Activated B cell treated with CpG ODN at 0.5 μM for 24 hours (primary cell): ENCODE measurements at regions of chr17 and their contacts with region 1.

Region 1: GRCh38 chr17:27293898-27294688 is at the start of gene WSB1:
- DNase-seq: peak; percentile 94
- ATAC-seq: peak; percentile 83
- H3K4me3 Mint-ChIP-seq: peak within 1 kb of the TSS; percentile 100
- H3K27ac Mint-ChIP-seq: peak within 1 kb of the TSS; percentile 99
- H3K4me1 Mint-ChIP-seq: peaks cover 45% of the 10 kb centered on the region
- H3K27me3 Mint-ChIP-seq: no peaks in the 10 kb centered on the region
- CTCF ChIP-seq: no peak
- total RNA-seq, gene WSB1: 115 and 125 TPM in 2 replicates

Region 2: DNA sequence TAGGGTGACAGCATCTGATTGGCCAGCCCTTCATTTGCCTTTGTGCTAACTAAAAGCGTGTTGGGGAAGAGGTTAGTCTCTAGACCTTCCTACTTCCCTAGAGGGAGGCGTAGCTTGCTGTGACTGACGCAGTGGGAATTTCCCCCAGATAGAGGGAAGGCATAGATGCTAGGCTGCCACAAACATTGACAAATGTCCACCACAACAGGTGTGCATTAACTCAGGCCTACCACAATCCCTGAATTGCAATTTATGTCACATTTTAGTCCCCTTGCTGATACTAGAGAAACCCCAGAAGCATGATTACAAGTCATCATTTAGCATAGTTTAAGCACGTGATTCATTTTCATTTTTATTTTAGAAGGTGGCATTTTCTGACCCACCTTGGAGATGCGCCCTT is 76.5 kb before region 1 on chr17:
- CTCF ChIA-PET with region 1: no interaction called
- POLR2A ChIA-PET with region 1: interaction called, 61 read pairs
- intact Hi-C with region 1: loop called (anchors 1 kb)
- DNase-seq: no peak
- ATAC-seq: peak; percentile 88
- H3K4me3 Mint-ChIP-seq: peak overlapping the region; percentile 74
- H3K27ac Mint-ChIP-seq: peak overlapping the region; percentile 99
- H3K4me1 Mint-ChIP-seq: peaks cover 48% of the 10 kb centered on the region
- H3K27me3 Mint-ChIP-seq: no peaks in the 10 kb centered on the region
- CTCF ChIP-seq: no peak

Region 3: GRCh38 chr17:27276653-27277156 is 17.4 kb before region 1 on chr17:
- CTCF ChIA-PET with region 1: no interaction called
- POLR2A ChIA-PET with region 1: interaction called, 114 read pairs
- intact Hi-C with region 1: no loop called
- DNase-seq: no peak
- ATAC-seq: no peak
- H3K4me3 Mint-ChIP-seq: no peak overlapping the region
- H3K27ac Mint-ChIP-seq: no peak overlapping the region
- H3K4me1 Mint-ChIP-seq: peaks cover 19% of the 10 kb centered on the region
- H3K27me3 Mint-ChIP-seq: no peaks in the 10 kb centered on the region
- CTCF ChIP-seq: no peak

Region 4: GRCh38 chr17:27306276-27306835 is 12.3 kb after region 1 on chr17:
- CTCF ChIA-PET with region 1: no interaction called
- POLR2A ChIA-PET with region 1: interaction called, 21 read pairs
- intact Hi-C with region 1: no loop called
- DNase-seq: no peak
- ATAC-seq: no peak
- H3K4me3 Mint-ChIP-seq: no peak overlapping the region
- H3K27ac Mint-ChIP-seq: no peak overlapping the region
- H3K4me1 Mint-ChIP-seq: peaks cover 20% of the 10 kb centered on the region
- H3K27me3 Mint-ChIP-seq: no peaks in the 10 kb centered on the region
- CTCF ChIP-seq: no peak

Region 5: DNA sequence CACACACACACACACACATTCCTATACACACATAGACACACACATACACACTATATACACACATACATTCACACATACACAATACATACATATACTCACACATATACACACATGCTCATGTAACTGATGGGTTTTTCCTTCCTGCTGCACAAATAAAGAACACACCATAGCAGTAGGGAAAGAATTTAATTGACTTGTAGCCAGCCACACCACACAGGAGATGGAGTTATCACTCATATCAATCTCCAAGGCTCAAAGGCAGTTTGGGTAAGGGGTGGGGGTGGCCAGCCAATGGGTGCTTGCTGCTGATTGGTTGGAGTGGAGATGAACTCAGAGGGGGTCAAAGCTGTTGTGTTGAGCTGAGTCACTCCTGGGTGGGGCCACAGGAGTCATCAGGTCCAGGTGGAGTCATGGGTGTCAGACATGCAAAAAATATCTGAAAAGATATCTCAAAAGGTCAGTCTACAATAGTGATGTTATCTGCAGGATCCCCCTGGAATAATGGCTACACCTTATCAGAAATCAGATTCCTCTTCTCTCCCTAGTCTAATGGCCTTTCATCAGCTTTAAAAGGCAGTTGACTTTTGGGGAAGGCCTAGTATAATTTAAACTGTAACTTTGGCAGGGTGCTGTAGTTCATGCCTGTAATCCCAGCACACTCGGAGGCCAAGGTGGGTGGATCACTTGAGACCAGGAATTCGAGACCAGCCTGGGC is 45.9 kb after region 1 on chr17:
- CTCF ChIA-PET with region 1: no interaction called
- POLR2A ChIA-PET with region 1: interaction called, 5 read pairs
- intact Hi-C with region 1: loop called (anchors 5 kb)
- DNase-seq: no peak
- ATAC-seq: peak; percentile 53
- H3K4me3 Mint-ChIP-seq: no peak overlapping the region
- H3K27ac Mint-ChIP-seq: peak overlapping the region; percentile 3
- H3K4me1 Mint-ChIP-seq: peaks cover 51% of the 10 kb centered on the region
- H3K27me3 Mint-ChIP-seq: no peaks in the 10 kb centered on the region
- CTCF ChIP-seq: no peak

Region 6: GRCh38 chr17:27455914-27456680 is 162.0 kb after region 1 on chr17 and contains the start of gene KSR1:
- CTCF ChIA-PET with region 1: no interaction called
- POLR2A ChIA-PET with region 1: interaction called, 4 read pairs
- intact Hi-C with region 1: loop called (anchors 5 kb)
- DNase-seq: peak; percentile 81
- ATAC-seq: peak; percentile 94
- H3K4me3 Mint-ChIP-seq: peak within 1 kb of the TSS; percentile 92
- H3K27ac Mint-ChIP-seq: peak within 1 kb of the TSS; percentile 78
- H3K4me1 Mint-ChIP-seq: peaks cover 22% of the 10 kb centered on the region
- H3K27me3 Mint-ChIP-seq: no peaks in the 10 kb centered on the region
- CTCF ChIP-seq: no peak
- total RNA-seq, gene KSR1: 90.1 and 114 TPM in 2 replicates

Region 7: GRCh38 chr17:27586203-27586721 is 292.2 kb after region 1 on chr17:
- CTCF ChIA-PET with region 1: no interaction called
- POLR2A ChIA-PET with region 1: no interaction called
- intact Hi-C with region 1: loop called (anchors 1 kb)
- DNase-seq: no peak
- ATAC-seq: no peak
- H3K4me3 Mint-ChIP-seq: no peak overlapping the region
- H3K27ac Mint-ChIP-seq: no peak overlapping the region
- H3K4me1 Mint-ChIP-seq: peaks cover 18% of the 10 kb centered on the region
- H3K27me3 Mint-ChIP-seq: no peaks in the 10 kb centered on the region
- CTCF ChIP-seq: no peak